Activated T-helper 2 cell treated with anti-CD3 and anti-CD28 coated beads, Interferon-gamma antibody, Interleukin-2, Interleukin-4, amounts not matched to agents 10 μg/mL and 5 μg/mL and 100 μg/mL, durations not matched to agents 14 hours and 24 hours and 36 hours (primary cell): ENCODE measurements at regions of chr6 and their contacts with region 1.

Region 1: DNA sequence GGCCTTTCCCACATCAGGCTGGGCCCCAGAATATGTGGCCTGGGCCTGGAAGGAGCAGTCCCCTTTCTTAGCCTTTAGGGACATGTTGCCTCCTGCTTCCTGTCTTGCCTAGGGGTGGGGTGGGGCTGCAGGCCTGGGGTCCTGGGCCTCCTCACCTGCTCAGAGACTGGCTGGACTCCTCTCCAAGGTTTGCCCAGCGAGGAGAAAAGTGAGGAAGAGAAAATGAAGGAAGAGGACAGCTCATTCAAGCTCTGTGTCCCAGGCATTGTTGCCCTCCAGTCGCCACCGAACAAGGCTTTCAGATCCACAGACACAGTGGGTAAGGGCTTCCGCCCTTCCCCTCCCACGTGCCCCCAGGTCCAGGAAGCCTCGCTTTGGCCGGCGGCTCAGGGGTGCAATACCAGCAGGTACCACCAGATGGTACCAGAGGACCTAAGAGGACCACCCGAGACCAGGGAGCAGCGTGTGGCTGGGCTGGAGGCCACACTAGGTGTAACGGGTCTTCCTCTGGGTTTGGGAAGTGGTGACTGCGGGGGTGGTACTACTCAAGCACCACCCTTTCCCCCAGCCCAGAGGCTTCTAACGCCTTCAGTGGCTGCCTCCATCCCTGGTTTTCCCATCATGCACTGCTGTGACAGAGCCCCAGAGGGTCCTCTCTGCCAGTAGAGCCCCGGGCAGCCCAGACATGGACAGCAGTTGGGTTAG is 5.5 kb upstream of the BAK1 start:
- DNase-seq: peak; percentile 83
- H3K4me3 Mint-ChIP-seq: peak overlapping the region; percentile 73
- H3K27ac Mint-ChIP-seq: peak overlapping the region; percentile 90
- H3K4me1 Mint-ChIP-seq: peaks cover 16% of the 10 kb centered on the region
- H3K27me3 Mint-ChIP-seq: no peaks in the 10 kb centered on the region

Region 2: GRCh38 chr6:33620856-33621710 is 35.5 kb after region 1 on chr6 and contains the start of gene ITPR3:
- intact Hi-C with region 1: loop called (anchors 2 kb)
- DNase-seq: peak; percentile 73
- H3K4me3 Mint-ChIP-seq: peak within 1 kb of the TSS; percentile 95
- H3K27ac Mint-ChIP-seq: peak within 1 kb of the TSS; percentile 81
- H3K4me1 Mint-ChIP-seq: peaks cover 35% of the 10 kb centered on the region
- H3K27me3 Mint-ChIP-seq: no peaks in the 10 kb centered on the region
- total RNA-seq, gene ITPR3: 40.7 and 41.7 TPM in 2 replicates

Region 3: DNA sequence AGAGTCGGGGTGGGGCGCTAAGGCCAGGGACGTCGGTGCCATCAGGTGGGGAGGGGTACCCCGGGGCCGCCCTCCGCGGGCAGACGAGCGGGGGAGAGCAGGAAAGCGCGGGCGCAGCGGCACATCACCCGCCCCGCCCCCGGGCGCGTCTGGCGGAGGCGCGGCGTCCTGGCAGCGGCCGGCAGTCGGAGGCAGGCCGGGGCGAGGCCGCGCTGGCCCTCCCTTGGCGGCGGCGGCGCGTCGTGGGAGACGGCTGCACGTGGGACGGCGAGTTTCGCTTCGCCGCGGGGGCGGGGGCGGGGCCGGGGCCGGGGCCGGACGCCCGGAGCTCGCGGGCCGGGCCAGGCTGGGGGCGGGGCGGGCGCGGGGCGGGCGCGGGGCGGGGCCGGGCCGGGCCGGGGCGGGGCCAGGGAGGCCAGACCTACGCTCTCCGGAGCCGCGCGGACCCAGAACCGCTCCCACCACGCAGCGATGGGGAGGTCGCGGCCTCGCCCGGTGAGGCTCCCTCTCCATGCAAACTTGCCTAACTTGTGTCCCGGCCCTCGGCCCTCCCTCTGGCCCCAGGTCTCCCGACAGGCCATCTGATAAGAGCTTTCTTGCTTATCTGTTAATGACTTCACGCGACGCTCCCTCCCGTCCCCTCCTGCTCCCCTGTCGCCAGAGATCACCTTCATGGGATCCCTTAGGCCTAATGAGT is 48.1 kb after region 1 on chr6:
- intact Hi-C with region 1: loop called (anchors 1 kb)
- DNase-seq: peak; percentile 60
- H3K4me3 Mint-ChIP-seq: peak overlapping the region; percentile 82
- H3K27ac Mint-ChIP-seq: peak overlapping the region; percentile 64
- H3K4me1 Mint-ChIP-seq: peaks cover 42% of the 10 kb centered on the region
- H3K27me3 Mint-ChIP-seq: no peaks in the 10 kb centered on the region

Region 4: GRCh38 chr6:33700391-33701050 is 115.0 kb after region 1 on chr6:
- intact Hi-C with region 1: loop called (anchors 1 kb)
- DNase-seq: peak; percentile 66
- H3K4me3 Mint-ChIP-seq: peak overlapping the region; percentile 15
- H3K27ac Mint-ChIP-seq: peak overlapping the region; percentile 86
- H3K4me1 Mint-ChIP-seq: peaks cover 37% of the 10 kb centered on the region
- H3K27me3 Mint-ChIP-seq: no peaks in the 10 kb centered on the region